Panc1 (cell line): ENCODE measurements at regions of chr2 and their contacts with region 1.

Region 1: DNA sequence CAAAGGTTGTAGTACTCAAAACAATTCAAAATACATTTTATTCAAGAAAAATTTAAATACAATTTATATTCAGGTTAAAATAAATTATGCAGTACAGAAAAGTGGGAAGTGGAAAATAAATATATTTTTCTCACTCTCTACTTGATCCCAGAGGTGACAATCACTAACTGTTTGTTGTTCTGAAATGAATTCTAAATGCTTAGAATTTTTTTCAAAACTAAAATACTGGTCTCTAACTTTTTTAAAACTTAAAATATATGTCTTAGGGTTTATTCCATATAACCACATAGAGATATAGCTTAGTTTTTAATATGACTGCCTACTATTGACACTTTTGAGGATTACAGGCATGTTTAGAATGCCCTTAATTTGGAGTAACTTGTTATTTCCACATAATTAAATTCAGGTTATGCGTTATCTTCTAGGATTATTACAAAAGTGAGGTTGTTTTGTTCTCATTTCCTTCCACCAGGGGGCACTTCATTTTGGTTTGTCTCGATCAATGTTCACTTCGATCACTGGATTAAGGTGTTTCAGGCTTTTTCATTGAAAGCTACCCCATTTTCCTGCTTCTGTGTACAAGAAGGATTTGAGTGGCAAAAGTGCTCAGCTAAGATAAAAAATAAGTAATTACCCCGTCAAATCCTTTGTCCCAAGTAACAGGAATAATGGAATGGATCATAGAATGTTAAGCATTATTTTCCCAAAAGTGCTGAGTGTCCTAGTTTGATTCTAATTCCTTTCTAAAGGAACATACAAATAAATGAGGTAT is 27.1 kb upstream of the TFPI start:
- DNase-seq: peak; percentile 30
- ATAC-seq: no peak; the same call in 1 of the 2 replicates
- H3K4me3 ChIP-seq: peak overlapping the region; percentile 4 to 34; a peak in 2 of 4 replicates
- H3K27ac ChIP-seq: peak overlapping the region; percentile 91
- H3K4me1 ChIP-seq: peaks cover 31% of the 10 kb centered on the region
- H3K27me3 ChIP-seq: no peaks in the 10 kb centered on the region
- CTCF ChIP-seq: peak; percentile 62; the same call in 1 of the 2 replicates

Region 2: DNA sequence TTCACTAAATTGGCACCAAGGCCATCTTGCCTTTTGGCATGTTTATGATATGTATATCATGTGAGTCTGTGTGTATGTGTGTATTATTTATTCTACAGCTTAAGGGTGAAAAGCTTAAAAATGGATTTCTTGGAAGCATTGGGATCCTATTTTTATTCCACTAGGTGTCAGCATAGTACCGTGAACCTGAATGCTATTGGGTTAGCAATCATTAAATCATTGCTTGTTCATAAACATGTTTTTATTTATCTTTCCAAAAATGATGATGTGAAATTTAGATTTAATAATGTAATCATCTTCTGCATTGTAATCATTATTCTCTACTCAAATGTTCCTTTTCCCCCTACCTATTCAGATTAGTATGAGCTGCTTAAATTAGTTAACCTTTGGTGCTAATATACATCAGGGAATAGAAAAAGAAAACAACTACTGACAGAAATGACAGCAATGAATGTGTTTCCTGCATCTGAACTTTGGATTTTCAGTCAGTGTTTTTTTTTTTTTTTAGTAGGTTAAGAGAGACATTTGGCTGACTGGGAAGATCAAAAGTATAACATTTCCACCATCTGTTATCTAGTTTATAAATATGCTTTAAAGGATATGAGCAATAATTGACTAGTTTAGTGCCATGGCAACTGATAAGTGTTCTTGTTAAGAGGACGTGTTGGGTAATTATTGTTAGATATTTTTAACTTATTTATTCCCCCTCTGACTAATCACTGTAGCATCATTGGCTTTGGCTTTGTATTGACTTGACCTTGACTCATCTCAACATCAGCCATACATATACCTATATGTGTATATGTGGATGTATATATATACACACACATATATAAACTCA is 718.2 kb before region 1 on chr2:
- CTCF ChIA-PET with region 1: no interaction called
- POLR2A ChIA-PET with region 1: no interaction called
- in situ Hi-C with region 1: no loop called
- intact Hi-C with region 1: loop called (anchors 10 kb)
- DNase-seq: no peak
- ATAC-seq: peak; percentile 75; the same call in 1 of the 2 replicates
- H3K4me3 ChIP-seq: no peak overlapping the region
- H3K27ac ChIP-seq: no peak overlapping the region
- H3K4me1 ChIP-seq: no peaks in the 10 kb centered on the region
- H3K27me3 ChIP-seq: no peaks in the 10 kb centered on the region
- CTCF ChIP-seq: peak; percentile 76; the same call in 1 of the 2 replicates

Region 3: DNA sequence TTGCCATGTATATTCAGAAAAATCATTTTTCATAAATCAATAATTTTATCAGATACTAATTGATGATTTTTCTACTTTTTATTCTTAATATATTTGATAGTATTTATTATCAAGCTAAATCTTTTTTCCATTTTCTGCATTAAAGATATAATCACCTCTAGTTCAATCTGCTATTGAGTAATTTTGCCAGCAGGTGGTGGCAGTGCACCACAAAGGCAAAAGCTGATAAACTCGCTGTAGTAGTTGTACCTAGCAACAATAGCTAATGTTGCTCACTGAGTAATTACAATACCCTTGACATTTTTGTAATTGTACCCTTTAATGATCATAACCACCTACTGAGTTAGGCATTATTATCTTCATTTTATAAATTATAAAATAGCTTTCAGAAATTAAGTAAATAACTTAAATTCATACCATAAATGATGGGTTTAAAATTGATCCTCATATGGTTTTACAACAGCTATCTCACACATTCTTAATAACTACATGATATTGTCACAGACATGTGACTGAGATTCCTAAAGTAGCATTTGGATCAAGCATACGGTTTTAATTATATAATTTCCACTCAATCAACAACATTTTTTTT is 81.3 kb before region 1 on chr2:
- CTCF ChIA-PET with region 1: interaction called, 31 read pairs
- POLR2A ChIA-PET with region 1: no interaction called
- in situ Hi-C with region 1: no loop called
- intact Hi-C with region 1: loop called (anchors 1 kb)
- DNase-seq: peak; percentile 56
- ATAC-seq: peak; percentile 71
- H3K4me3 ChIP-seq: no peak overlapping the region
- H3K27ac ChIP-seq: peak overlapping the region; percentile 97; the same call in 1 of the 2 replicates
- H3K4me1 ChIP-seq: peaks cover 58% of the 10 kb centered on the region
- H3K27me3 ChIP-seq: no peaks in the 10 kb centered on the region
- CTCF ChIP-seq: peak; percentile 79; the same call in 1 of the 2 replicates

Region 4: GRCh38 chr2:187842978-187843847 is 261.9 kb after region 1 on chr2:
- CTCF ChIA-PET with region 1: interaction called, 7 read pairs
- POLR2A ChIA-PET with region 1: no interaction called
- in situ Hi-C with region 1: no loop called
- intact Hi-C with region 1: loop called (anchors 2 kb)
- DNase-seq: peak; percentile 32
- ATAC-seq: peak; percentile 87
- H3K4me3 ChIP-seq: no peak overlapping the region
- H3K27ac ChIP-seq: peak overlapping the region; percentile 78
- H3K4me1 ChIP-seq: peaks cover 6% of the 10 kb centered on the region; the same call in 1 of the 2 replicates
- H3K27me3 ChIP-seq: no peaks in the 10 kb centered on the region
- CTCF ChIP-seq: peak; percentile 67; the same call in 1 of the 2 replicates

Region 5: GRCh38 chr2:188291617-188292347 is 710.5 kb after region 1 on chr2 and contains the start of gene GULP1:
- CTCF ChIA-PET with region 1: no interaction called
- POLR2A ChIA-PET with region 1: no interaction called
- in situ Hi-C with region 1: no loop called
- intact Hi-C with region 1: loop called (anchors 10 kb)
- DNase-seq: no peak
- ATAC-seq: peak; percentile 73
- H3K4me3 ChIP-seq: peak within 1 kb of the TSS; percentile 81 to 82
- H3K27ac ChIP-seq: peak within 1 kb of the TSS; percentile 95
- H3K4me1 ChIP-seq: peaks cover 16% of the 10 kb centered on the region
- H3K27me3 ChIP-seq: no peaks in the 10 kb centered on the region
- CTCF ChIP-seq: peak; percentile 89
- total RNA-seq, gene GULP1: 51.5 TPM

Region 6: GRCh38 chr2:188512456-188512855 is 931.1 kb after region 1 on chr2:
- CTCF ChIA-PET with region 1: no interaction called
- POLR2A ChIA-PET with region 1: no interaction called
- in situ Hi-C with region 1: no loop called
- intact Hi-C with region 1: loop called (anchors 5 kb)
- DNase-seq: no peak
- ATAC-seq: peak; percentile 72; the same call in 1 of the 2 replicates
- H3K4me3 ChIP-seq: no peak overlapping the region
- H3K27ac ChIP-seq: no peak overlapping the region
- H3K4me1 ChIP-seq: peaks cover 21% of the 10 kb centered on the region; the same call in 1 of the 2 replicates
- H3K27me3 ChIP-seq: no peaks in the 10 kb centered on the region
- CTCF ChIP-seq: peak; percentile 57; the same call in 1 of the 2 replicates